Dorsolateral prefrontal cortex (tissue), 120 donors: ENCODE measurements at regions of chr2 and their contacts with region 1.

Region 1: GRCh38 chr2:133561045-133561852 is 7.0 kb downstream of the NCKAP5 start:
- DNase-seq: peak in 1 of 10 donors; percentile 36
- H3K4me3 ChIP-seq: no peak overlapping the region
- H3K27ac ChIP-seq: peak overlapping the region in 7 of 59 donors; percentile 4 to 44 (median 25)
- H3K27me3 ChIP-seq: peaks cover 0 to 10% (median 0%) of the 10 kb centered on the region in 45 donors
- CTCF ChIP-seq: peak; percentile 27 to 95 (median 79)

Region 2: DNA sequence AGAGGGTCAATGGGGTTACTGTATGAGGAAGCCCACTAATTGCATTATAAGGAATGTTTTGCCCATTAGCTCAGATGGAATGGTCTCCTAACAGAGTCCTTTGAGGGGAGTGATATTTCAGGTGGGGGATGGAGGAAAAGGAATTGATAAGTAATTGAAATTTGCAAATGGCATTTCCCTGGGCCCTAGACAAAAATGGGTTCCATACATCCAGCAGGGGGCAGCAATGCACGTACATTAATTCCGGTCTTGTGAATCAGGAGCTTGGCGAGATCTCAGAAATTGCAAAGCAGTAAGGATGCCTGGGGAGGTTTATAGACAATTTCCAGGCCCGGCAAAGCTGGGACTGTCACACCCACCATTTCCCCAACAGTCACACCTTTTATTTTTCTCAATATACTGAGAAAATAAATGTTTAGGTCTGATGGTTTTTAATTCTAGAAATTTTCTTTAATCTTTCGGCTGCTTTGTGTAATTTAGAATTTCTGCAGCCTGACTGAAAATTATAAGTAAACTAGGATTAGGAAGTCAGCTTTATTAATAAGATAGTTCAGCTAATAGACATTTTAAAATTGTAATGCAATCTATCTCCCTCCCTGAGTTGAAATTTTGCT is 1014.1 kb before region 1 on chr2:
- intact Hi-C with region 1: loop called (anchors 5 to 10 kb)
- DNase-seq: peak; percentile 46 to 89 (median 70)
- H3K4me3 ChIP-seq: no peak overlapping the region
- H3K27ac ChIP-seq: no peak overlapping the region
- H3K27me3 ChIP-seq: peaks cover 0 to 4% (median 0%) of the 10 kb centered on the region in 45 donors
- CTCF ChIP-seq: peak; percentile 73 to 92 (median 83)

Region 3: DNA sequence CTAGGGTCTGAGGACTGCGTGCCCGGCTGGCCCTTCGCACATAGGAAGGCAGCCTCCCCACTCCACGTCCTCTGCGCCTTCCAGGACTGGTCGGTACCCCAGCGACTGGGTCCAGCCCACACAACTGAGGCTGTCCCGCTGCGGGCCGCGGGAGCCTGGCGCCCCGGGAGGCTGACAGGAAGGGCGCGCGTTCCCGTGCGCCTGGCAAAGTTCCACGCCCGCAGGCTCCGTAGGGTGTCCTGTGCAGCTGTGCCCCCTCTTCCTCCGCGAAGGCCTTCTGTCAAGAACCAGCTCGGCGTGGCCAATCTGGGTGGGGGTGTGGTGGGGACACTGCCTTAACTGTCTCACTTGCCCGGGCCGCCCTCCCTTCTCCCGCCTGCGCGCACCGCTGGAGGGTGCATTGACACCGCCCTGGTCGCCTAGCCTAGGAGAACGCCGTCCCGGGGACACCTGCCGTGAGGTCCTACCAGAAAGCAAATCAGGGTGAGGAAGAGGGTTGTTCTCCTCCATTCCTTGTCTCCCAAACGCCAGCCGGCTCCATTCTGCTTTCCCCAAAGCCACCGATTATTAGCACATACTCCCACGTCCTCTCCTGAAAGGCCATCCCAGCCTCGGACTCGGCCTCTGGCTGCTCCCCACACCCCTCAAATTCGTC is 890.6 kb before region 1 on chr2:
- intact Hi-C with region 1: loop called in 1 of 2 experiments (anchors 10 kb)
- DNase-seq: peak in 7 of 10 donors; percentile 4 to 53 (median 43)
- H3K4me3 ChIP-seq: peak overlapping the region; percentile 42 to 80 (median 64)
- H3K27ac ChIP-seq: peak overlapping the region in 23 of 59 donors; percentile 3 to 72 (median 30)
- H3K27me3 ChIP-seq: peaks cover 0 to 37% (median 19%) of the 10 kb centered on the region in 45 donors
- CTCF ChIP-seq: peak in 7 of 56 donors; percentile 3 to 21 (median 10)

Region 4: GRCh38 chr2:133266041-133266925 is 295.0 kb before region 1 on chr2:
- intact Hi-C with region 1: loop called in 1 of 2 experiments (anchors 10 kb)
- DNase-seq: peak in 2 of 10 donors; percentile 10 to 42
- H3K4me3 ChIP-seq: peak overlapping the region; percentile 20 to 75 (median 61)
- H3K27ac ChIP-seq: peak overlapping the region in 5 of 59 donors; percentile 27 to 60 (median 36)
- H3K27me3 ChIP-seq: peaks cover 0 to 6% (median 0%) of the 10 kb centered on the region in 45 donors
- CTCF ChIP-seq: peak in 1 of 56 donors; percentile 9

Region 5: DNA sequence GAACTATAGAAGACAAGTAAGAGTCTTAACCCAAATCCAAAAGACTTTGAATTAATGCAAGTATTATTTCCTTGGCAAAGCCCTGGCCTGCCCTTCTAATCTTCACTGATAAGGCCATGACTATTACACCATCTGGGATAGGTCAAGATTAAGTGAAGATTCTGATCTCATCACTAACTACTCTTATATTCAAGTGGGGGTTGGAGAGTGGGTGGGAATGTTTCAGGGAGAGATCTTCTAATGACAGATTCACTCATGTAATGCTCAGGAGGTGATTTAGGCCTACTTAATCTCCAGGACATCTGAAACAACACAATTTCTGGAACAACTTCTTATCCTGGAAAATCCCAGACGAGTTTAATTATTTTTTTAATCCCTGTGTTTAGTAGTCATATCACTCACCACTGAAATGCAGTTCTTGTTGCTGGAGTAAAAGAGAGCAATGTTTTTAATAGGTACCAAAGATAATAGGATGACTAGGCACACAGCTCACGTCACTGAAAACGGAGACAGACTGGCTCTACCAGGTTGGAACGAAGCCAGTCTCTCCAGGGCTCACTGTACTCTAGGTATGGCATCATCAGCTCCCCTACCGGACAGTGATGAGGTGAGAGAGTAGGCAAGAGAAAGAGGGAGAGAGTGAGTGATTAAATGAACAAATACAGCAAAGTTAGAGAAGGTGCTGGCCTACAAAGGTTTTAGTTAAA is 126.1 kb before region 1 on chr2:
- intact Hi-C with region 1: no loop called
- DNase-seq: no peak
- H3K4me3 ChIP-seq: no peak overlapping the region
- H3K27ac ChIP-seq: no peak overlapping the region
- H3K27me3 ChIP-seq: peaks cover 0 to 4% (median 0%) of the 10 kb centered on the region in 45 donors
- CTCF ChIP-seq: no peak

Region 6: GRCh38 chr2:133489641-133490410 is 71.4 kb before region 1 on chr2:
- intact Hi-C with region 1: loop called in 1 of 2 experiments (anchors 5 kb)
- DNase-seq: no peak
- H3K4me3 ChIP-seq: no peak overlapping the region
- H3K27ac ChIP-seq: no peak overlapping the region
- H3K27me3 ChIP-seq: no peaks in the 10 kb centered on the region
- CTCF ChIP-seq: no peak

Region 7: DNA sequence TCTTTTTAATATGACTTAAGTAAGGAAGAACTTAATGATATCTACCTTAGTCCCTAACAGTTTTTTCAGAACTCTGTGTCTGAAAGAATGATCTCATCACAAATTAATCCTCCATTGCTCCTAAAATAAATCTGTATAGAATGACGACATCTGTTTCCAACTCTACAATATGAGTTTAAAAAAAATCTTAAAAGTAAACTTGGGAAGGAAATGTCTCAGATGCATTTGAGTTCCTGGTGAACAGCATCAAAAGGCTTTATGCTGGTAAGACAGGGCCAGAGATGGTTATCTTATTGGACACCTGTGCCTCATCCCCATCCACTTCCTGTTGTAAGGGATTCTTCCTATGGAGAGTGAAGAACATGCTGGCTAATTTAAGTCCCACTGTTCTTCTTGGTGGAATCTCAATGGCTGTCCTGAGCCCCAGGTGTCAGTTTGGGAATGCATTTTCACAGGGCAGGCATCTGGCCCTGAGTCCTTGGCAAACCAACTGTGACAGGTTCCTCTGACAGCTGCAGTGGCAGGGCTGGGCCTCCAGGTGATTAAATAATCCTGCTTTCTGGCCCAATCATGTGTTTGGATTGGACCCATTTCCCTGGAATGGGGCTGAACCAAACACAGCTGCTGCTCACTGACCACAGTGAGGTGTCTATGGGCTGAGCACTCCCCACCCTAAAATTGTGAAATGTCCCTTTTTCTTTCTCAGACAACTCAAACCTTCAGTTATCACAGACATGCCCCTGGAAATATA is 19.9 kb after region 1 on chr2:
- intact Hi-C with region 1: no loop called
- DNase-seq: no peak
- H3K4me3 ChIP-seq: no peak overlapping the region
- H3K27ac ChIP-seq: no peak overlapping the region
- H3K27me3 ChIP-seq: no peaks in the 10 kb centered on the region
- CTCF ChIP-seq: peak in 1 of 56 donors; percentile 7